CD4-positive, alpha-beta memory T cell (primary cell): ENCODE measurements at regions of chr17 and their contacts with region 1.

Region 1: DNA sequence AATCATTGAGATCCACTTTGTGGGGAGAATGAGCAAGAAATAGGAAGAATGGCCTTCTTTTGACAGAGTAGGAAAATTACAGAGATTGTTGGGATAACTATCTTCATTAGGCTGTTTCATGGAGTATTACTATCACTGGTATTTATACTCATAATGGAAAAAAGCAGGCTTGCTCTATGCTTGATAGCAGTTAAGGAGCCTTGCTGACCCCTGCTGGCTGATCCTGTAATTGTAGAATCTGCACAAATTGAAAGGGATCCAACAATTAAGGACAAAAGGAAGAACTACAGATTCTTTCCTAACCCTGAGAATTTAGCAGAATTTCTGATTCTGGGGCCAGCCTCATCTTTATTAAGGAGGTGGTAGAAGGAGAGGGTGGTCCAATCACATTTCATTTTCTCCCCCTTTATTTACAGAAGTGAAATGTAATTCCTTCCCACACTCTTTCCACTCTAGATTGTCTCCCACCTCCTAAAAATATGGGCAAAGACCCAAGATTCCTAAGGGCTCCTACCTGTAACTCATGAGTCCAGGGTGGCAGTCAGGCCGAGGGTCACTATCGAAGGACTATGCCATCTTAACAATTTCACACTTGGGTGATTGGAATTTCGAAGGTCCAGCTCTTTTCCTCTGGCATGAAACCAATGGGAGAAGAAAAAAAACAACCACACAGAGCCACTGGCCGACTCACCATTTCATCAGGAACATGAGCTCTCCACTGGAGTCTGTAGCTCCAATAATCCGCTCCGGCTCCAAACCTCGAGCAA is 26.3 kb downstream of the NFE2L1 start:
- DNase-seq: peak; percentile 64 to 85 (median 69)
- H3K4me3 ChIP-seq: no peak overlapping the region
- H3K4me3 Mint-ChIP-seq: no peak overlapping the region
- H3K27ac ChIP-seq: no peak overlapping the region
- H3K27ac Mint-ChIP-seq: peak overlapping the region in 2 of 7 donors; percentile 48 to 57
- H3K4me1 ChIP-seq: no peaks in the 10 kb centered on the region
- H3K4me1 Mint-ChIP-seq: peaks cover 0 to 6% (median 2%) of the 10 kb centered on the region in 4 donors
- H3K27me3 ChIP-seq: no peaks in the 10 kb centered on the region
- H3K27me3 Mint-ChIP-seq: no peaks in the 10 kb centered on the region

Region 2: GRCh38 chr17:47949136-47949759 is 125.2 kb before region 1 on chr17:
- CTCF ChIA-PET with region 1: interaction called, 11 read pairs
- POLR2A ChIA-PET with region 1: no interaction called
- intact Hi-C with region 1: no loop called
- DNase-seq: peak; percentile 59 to 71 (median 63)
- H3K4me3 ChIP-seq: peak overlapping the region in 1 of 2 donors; percentile 51
- H3K4me3 Mint-ChIP-seq: peak overlapping the region; percentile 61 to 91 (median 74)
- H3K27ac ChIP-seq: peak overlapping the region; percentile 37
- H3K27ac Mint-ChIP-seq: peak overlapping the region; percentile 29 to 93 (median 69)
- H3K4me1 ChIP-seq: peaks cover 34% of the 10 kb centered on the region
- H3K4me1 Mint-ChIP-seq: peaks cover 21 to 36% (median 29%) of the 10 kb centered on the region in 4 donors
- H3K27me3 ChIP-seq: no peaks in the 10 kb centered on the region
- H3K27me3 Mint-ChIP-seq: no peaks in the 10 kb centered on the region

Region 3: DNA sequence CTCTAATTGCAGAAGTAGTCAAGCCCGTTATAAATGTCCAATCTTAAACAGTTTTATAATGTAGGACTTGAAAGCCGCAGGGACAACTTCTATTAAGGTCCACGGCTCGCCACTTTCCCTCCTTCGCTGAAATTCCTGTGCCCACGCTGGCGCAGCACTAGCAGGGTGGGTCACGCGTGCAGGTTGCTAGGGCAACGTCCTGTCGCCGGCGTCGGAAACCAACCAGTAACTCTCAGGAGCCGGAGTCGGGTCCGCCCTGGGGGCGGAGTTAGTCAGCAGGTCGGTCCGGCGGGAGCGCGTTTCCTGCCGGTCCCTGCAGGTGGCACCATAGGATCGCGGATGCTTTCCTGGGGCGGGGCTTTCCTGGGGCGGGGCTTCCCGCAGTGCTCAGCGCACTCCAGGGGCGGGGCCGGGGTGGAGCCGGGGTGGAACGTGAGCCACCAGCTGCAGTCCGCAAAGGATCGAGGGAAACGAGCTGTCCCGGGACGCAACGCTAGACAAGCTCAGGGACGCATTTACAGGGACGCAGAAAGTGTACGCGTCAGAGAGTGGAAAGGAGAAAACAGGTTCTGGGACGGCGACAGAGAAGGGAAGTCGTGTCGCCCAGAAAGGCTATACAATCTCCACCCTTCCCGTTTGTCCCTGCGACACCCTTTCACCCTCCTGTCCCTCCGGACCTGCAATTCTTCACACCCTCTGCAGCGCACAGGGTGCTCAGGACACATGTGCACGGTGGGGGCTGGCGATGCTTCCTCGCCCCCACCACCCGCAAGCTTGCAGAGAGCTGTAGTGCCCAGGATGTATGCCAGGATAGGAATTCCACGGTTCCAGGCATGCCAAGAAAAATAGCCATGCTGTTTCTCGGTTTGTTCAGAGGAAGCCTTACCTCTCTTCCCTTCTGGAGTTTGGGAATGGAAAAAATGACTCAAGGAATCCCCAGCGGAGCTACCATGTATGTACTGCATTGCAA is 49.3 kb before region 1 on chr17:
- CTCF ChIA-PET with region 1: interaction called, 148 read pairs
- POLR2A ChIA-PET with region 1: interaction called, 6 read pairs
- intact Hi-C with region 1: loop called (anchors 1 kb)
- DNase-seq: peak; percentile 95 to 98 (median 96)
- H3K4me3 ChIP-seq: peak overlapping the region; percentile 53 to 81
- H3K4me3 Mint-ChIP-seq: peak overlapping the region; percentile 84 to 96 (median 92)
- H3K27ac ChIP-seq: peak overlapping the region; percentile 32
- H3K27ac Mint-ChIP-seq: peak overlapping the region; percentile 87 to 98 (median 95)
- H3K4me1 ChIP-seq: peaks cover 36% of the 10 kb centered on the region
- H3K4me1 Mint-ChIP-seq: peaks cover 12 to 38% (median 27%) of the 10 kb centered on the region in 4 donors
- H3K27me3 ChIP-seq: no peaks in the 10 kb centered on the region
- H3K27me3 Mint-ChIP-seq: peaks cover 7 to 16% of the 10 kb centered on the region in 2 donors

Region 4: GRCh38 chr17:48047741-48048383 is 26.6 kb before region 1 on chr17 and contains the start of gene NFE2L1:
- CTCF ChIA-PET with region 1: interaction called, 23 read pairs
- POLR2A ChIA-PET with region 1: interaction called, 5 read pairs
- intact Hi-C with region 1: no loop called
- DNase-seq: peak; percentile 98 to 100 (median 98)
- H3K4me3 ChIP-seq: peak within 1 kb of the TSS; percentile 86 to 88
- H3K4me3 Mint-ChIP-seq: peak within 1 kb of the TSS; percentile 94 to 99 (median 96)
- H3K27ac ChIP-seq: peak within 1 kb of the TSS; percentile 76
- H3K27ac Mint-ChIP-seq: peak within 1 kb of the TSS; percentile 94 to 99 (median 99)
- H3K4me1 ChIP-seq: peaks cover 54% of the 10 kb centered on the region
- H3K4me1 Mint-ChIP-seq: peaks cover 29 to 69% (median 49%) of the 10 kb centered on the region in 4 donors
- H3K27me3 ChIP-seq: no peaks in the 10 kb centered on the region
- H3K27me3 Mint-ChIP-seq: no peaks in the 10 kb centered on the region
- total RNA-seq, gene NFE2L1: 53.5 to 62.5 TPM

Region 5: GRCh38 chr17:48101012-48101720 is 26.7 kb after region 1 on chr17 and contains the start of gene CBX1:
- CTCF ChIA-PET with region 1: interaction called, 73 read pairs
- POLR2A ChIA-PET with region 1: no interaction called
- intact Hi-C with region 1: no loop called
- DNase-seq: peak; percentile 93 to 96 (median 93)
- H3K4me3 ChIP-seq: peak within 1 kb of the TSS; percentile 36 to 76
- H3K4me3 Mint-ChIP-seq: peak within 1 kb of the TSS; percentile 87 to 95 (median 90)
- H3K27ac ChIP-seq: peak within 1 kb of the TSS; percentile 33
- H3K27ac Mint-ChIP-seq: peak within 1 kb of the TSS; percentile 74 to 93 (median 88)
- H3K4me1 ChIP-seq: peaks cover 18% of the 10 kb centered on the region
- H3K4me1 Mint-ChIP-seq: peaks cover 21 to 49% (median 31%) of the 10 kb centered on the region in 4 donors
- H3K27me3 ChIP-seq: no peaks in the 10 kb centered on the region
- H3K27me3 Mint-ChIP-seq: no peaks in the 10 kb centered on the region
- total RNA-seq, gene CBX1: 33.9 to 37.1 TPM

Region 6: GRCh38 chr17:48593840-48594537 is 519.5 kb after region 1 on chr17:
- CTCF ChIA-PET with region 1: interaction called, 10 read pairs
- POLR2A ChIA-PET with region 1: no interaction called
- intact Hi-C with region 1: no loop called
- DNase-seq: peak; percentile 71 to 82 (median 77)
- H3K4me3 ChIP-seq: peak overlapping the region in 1 of 2 donors; percentile 30
- H3K4me3 Mint-ChIP-seq: peak overlapping the region; percentile 80 to 92 (median 82)
- H3K27ac ChIP-seq: no peak overlapping the region
- H3K27ac Mint-ChIP-seq: peak overlapping the region in 1 of 7 donors; percentile 74
- H3K4me1 ChIP-seq: peaks cover 46% of the 10 kb centered on the region
- H3K4me1 Mint-ChIP-seq: peaks cover 23 to 55% (median 43%) of the 10 kb centered on the region in 4 donors
- H3K27me3 ChIP-seq: peaks cover 47% of the 10 kb centered on the region
- H3K27me3 Mint-ChIP-seq: peaks cover 44 to 72% of the 10 kb centered on the region in 2 donors